Heart right ventricle (tissue), 16 donors: ENCODE measurements at regions of chr1 and their contacts with region 1.

Region 1: GRCh38 chr1:200453553-200453905 is 43.7 kb upstream of the ZNF281 start:
- DNase-seq: no peak
- ATAC-seq: no peak
- H3K4me3 ChIP-seq: no peak overlapping the region
- H3K27ac ChIP-seq: no peak overlapping the region
- H3K4me1 ChIP-seq: no peaks in the 10 kb centered on the region
- H3K27me3 ChIP-seq: peaks cover 0 to 5% (median 0%) of the 10 kb centered on the region in 7 donors
- CTCF ChIP-seq: no peak

Region 2: DNA sequence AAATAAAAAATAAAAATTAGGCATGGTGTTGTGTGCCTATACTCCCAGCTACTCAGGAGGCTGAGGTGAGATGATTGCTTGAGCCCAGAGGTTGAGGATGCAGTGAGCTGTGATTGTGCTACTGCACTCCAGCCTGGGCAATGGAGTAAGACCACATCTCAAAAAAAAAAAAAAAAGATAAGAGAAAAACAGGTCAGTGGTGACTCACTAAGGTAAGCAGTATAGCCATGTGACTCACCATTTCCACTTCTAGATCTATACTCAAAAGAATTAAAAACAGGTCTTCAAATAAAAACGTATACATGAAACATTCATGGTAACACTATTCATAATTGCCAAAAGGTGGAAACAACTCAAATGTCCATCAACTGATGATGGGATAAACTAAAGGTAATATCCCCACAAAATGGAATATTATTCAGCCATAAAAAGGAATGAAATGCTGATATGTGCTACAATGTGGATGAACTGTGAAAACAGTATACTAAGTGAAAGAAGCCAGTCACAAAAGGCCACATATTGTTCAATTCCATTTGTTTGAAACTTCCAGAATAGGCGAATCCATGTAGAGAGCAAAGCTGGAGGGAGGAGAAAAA is 118.8 kb before region 1 on chr1:
- intact Hi-C with region 1: loop called in 1 of 10 experiments (anchors 5 kb)
- DNase-seq: no peak
- ATAC-seq: no peak
- H3K4me3 ChIP-seq: no peak overlapping the region
- H3K27ac ChIP-seq: no peak overlapping the region
- H3K4me1 ChIP-seq: peaks cover 0 to 20% (median 5%) of the 10 kb centered on the region in 9 donors
- H3K27me3 ChIP-seq: no peaks in the 10 kb centered on the region
- CTCF ChIP-seq: no peak